PC-9 (cell line): ENCODE measurements at regions of chr17 and their contacts with region 1.

Region 1: GRCh38 chr17:40443583-40444327 is 505 bp downstream of the IGFBP4 start:
- DNase-seq: peak; percentile 51 to 69
- H3K4me3 ChIP-seq: peak overlapping the region; percentile 73
- H3K27ac ChIP-seq: no peak overlapping the region
- H3K4me1 ChIP-seq: peaks cover 24% of the 10 kb centered on the region
- H3K27me3 ChIP-seq: no peaks in the 10 kb centered on the region
- CTCF ChIP-seq: no peak; the same call in 1 of the 2 replicates

Region 2: GRCh38 chr17:40287494-40288369 is 156.0 kb before region 1 on chr17 and contains the start of gene CDC6:
- CTCF ChIA-PET with region 1: interaction called, 12 read pairs
- POLR2A ChIA-PET with region 1: no interaction called
- intact Hi-C with region 1: no loop called
- DNase-seq: peak; percentile 94 to 98
- H3K4me3 ChIP-seq: peak within 1 kb of the TSS; percentile 87
- H3K27ac ChIP-seq: peak within 1 kb of the TSS; percentile 66
- H3K4me1 ChIP-seq: peaks cover 60% of the 10 kb centered on the region
- H3K27me3 ChIP-seq: no peaks in the 10 kb centered on the region
- CTCF ChIP-seq: no peak
- total RNA-seq, gene CDC6: 37.8 and 44.9 TPM in 2 replicates

Region 3: DNA sequence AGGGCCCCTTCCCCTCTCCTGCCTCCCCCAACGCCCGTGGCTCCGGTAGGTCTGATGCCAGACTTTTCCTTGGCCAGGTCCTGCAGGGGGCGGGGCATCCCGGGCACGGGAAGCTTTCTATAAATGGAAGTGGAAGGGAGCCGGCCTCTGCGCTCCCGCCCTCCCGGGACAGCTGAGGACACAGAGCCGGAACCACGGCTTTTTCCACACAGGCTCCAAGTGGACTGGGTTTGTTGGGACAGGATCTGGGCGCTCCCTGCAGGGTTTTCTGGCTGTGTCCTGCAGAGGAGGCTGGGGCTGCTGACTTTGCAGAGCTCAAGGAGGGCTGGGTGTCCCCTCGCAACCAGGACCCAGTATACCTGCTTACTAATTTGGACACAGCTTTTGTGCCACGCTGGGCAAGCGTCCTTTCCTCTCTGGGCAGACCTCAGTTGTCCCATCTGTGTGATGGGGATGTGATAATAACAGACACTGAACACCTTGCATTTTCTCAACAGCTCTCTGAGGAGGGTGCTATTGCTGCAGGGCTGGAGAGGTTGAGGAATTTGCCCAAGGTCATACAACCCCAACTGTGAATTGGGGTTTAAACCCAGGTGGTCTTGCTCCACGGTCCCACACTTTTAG is 55.9 kb after region 1 on chr17:
- CTCF ChIA-PET with region 1: interaction called, 11 read pairs
- POLR2A ChIA-PET with region 1: interaction called, 5 read pairs
- intact Hi-C with region 1: loop called (anchors 5 kb)
- DNase-seq: peak; percentile 65 to 83
- H3K4me3 ChIP-seq: peak overlapping the region; percentile 80
- H3K27ac ChIP-seq: no peak overlapping the region
- H3K4me1 ChIP-seq: peaks cover 47% of the 10 kb centered on the region
- H3K27me3 ChIP-seq: no peaks in the 10 kb centered on the region
- CTCF ChIP-seq: peak; percentile 24; the same call in 1 of the 2 replicates

Region 4: DNA sequence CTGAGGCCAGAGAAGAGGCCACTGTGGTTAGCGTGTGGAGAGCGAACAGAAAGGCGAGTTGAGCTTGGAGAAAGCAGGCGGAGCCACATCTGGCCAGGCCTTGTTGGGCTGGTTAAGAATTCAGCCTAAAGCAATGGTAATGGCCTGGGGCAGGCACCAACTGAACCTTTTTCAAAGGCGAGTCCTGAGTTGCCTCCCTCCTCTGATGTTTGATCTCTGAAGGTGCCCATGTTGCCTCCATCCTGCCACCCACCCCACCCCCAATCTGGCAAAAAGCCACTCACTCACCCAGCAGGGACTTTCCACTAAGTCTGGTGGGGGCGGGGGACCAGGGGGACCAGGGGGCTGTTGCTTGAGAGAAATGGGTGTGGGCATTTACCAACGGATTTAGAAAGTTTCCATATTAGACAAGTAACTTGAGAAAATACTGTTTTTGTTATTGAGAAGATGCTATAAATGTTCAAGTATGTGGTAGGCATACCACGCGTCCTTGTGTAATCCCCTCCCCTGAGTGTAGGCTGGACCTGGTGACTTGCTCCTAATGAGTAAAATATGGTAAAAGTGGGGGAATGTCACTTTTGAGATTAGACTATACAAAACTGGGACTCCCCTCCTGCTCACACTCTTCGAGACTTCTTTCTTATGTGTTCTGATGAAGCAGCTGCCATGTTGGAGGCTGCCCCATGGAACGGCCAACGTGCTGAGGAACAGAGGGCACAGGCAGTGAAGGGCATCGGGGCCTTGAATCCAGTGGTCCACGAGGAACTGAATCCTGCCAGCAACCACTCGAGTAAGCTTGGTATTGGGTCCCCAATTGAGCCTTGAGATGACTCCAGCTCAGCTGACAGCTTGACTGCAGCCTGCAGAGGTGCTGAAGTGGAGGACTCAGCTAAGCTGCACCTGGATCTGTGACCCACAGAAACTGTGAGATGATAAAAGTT is 87.6 kb after region 1 on chr17:
- CTCF ChIA-PET with region 1: interaction called, 11 read pairs
- POLR2A ChIA-PET with region 1: no interaction called
- intact Hi-C with region 1: loop called (anchors 1 kb)
- DNase-seq: no peak
- H3K4me3 ChIP-seq: no peak overlapping the region
- H3K27ac ChIP-seq: no peak overlapping the region
- H3K4me1 ChIP-seq: peaks cover 35% of the 10 kb centered on the region
- H3K27me3 ChIP-seq: no peaks in the 10 kb centered on the region
- CTCF ChIP-seq: no peak

Region 5: DNA sequence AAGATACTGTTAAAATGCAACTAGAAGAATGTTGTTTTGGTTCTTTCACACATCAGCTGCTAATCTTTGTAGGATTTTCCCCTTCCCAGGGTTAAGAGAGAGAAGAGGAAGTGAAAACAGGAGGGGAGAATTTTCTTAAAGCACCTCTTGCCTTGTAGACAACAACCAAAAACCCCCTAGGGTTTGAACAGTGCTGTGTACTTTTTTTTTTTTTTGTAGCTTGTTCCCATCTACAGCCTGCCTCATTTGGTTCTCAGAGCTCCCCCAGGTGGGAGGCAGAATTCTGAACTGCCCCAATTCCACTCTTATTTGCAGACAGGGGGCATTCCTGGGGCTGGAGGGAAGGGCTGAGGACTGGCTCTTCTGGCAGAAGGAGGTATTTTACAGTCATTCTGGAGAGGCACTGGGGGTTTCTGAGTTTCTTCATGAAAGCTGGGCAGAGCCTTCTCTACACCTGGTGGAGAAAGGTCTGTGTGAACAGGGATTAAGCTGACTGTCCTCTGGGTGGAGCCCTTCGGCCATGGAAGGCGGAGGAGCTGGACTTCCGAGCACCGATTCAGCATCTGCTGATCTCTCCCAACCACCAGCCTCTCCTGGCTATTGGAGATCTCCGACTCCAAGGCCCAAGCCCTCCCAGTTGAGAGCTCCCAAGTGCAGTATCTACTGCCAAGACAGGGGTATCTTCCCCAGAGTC is 171.7 kb after region 1 on chr17:
- CTCF ChIA-PET with region 1: interaction called, 10 read pairs
- POLR2A ChIA-PET with region 1: no interaction called
- intact Hi-C with region 1: no loop called
- DNase-seq: peak; percentile 72
- H3K4me3 ChIP-seq: no peak overlapping the region
- H3K27ac ChIP-seq: no peak overlapping the region
- H3K4me1 ChIP-seq: peaks cover 10% of the 10 kb centered on the region
- H3K27me3 ChIP-seq: no peaks in the 10 kb centered on the region
- CTCF ChIP-seq: peak; percentile 73